ENCODE measurements at regions of chr6 and their contacts with region 1.

Region 1: GRCh38 chr6:139375232-139376016 is 976 bp upstream of the CITED2 start:
- DNase-seq: peak; percentile 84

Region 2: DNA sequence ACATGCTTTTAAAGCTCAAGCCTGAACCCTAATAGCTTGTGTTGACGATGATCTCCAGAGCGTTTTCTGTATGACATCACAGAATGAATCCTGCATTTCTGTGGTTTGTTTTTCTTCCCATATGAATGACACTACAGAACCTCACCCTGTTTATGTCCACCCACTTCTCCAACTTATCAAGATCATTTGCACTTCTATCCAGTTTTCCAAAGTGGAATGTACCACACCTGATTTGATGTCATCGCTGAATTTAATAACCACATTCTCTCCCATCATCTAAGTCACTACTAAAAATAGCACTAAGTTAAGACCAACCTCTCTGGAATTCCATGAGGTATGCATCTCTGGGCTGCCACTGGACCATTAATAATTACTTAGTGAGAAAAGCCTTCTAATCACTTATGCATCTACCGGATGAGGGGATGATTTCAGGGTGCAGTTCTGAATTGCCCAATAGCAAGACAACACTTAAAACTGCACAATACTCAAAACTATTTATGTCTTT is 32.3 kb after region 1 on chr6:
- CTCF ChIA-PET with region 1: no interaction called
- POLR2A ChIA-PET with region 1: no interaction called
- DNase-seq: no peak

Region 3: DNA sequence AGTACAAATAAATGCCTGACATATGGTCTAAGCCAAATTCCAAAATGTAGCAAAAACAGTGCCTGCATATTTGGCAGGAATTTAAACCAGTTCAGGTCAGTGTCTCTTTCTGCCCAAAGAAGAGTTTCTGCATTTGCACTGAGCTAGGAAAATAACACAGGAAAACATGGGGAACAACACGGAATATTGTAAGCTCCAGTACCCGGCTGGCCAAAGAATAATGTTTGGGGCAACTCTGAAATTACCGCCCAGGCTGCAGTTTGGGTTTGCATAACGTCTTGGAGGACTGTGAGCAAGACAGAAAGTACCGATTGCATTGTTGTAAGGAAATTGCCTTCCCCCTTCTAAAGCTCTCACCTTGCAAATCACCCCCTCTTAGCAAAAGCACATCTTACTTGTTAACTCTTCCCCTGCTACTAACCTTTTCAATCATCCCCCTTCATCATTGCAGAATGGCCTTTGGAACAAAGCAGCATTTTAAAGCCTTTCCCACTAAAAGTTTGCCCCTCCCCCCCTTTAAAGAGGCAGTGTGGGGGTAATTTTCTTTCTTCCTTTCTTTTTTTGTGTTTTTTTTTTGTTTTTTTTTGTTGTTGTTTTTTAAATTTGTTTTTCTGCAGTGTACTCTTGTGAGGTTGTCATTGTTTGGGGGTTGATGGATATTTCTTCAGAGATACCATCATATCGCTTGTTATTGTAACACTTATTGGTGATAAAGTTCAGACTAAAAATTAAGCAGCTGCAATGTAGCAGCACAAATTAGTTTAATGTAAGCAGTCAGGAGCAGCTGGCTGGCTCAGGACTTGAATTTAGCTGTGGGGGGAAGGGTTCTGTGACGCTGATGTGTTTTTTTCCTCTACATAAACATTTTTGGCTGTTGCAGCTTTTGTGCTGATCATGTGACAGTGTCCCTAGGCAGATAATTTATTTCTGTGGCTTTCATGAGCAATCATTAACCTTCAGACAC is 99.0 kb after region 1 on chr6:
- CTCF ChIA-PET with region 1: no interaction called
- POLR2A ChIA-PET with region 1: interaction called, 29 read pairs
- DNase-seq: peak; percentile 29

Region 4: GRCh38 chr6:139577763-139578604 is 202.6 kb after region 1 on chr6:
- CTCF ChIA-PET with region 1: no interaction called
- POLR2A ChIA-PET with region 1: interaction called, 12 read pairs
- DNase-seq: no peak

Region 5: DNA sequence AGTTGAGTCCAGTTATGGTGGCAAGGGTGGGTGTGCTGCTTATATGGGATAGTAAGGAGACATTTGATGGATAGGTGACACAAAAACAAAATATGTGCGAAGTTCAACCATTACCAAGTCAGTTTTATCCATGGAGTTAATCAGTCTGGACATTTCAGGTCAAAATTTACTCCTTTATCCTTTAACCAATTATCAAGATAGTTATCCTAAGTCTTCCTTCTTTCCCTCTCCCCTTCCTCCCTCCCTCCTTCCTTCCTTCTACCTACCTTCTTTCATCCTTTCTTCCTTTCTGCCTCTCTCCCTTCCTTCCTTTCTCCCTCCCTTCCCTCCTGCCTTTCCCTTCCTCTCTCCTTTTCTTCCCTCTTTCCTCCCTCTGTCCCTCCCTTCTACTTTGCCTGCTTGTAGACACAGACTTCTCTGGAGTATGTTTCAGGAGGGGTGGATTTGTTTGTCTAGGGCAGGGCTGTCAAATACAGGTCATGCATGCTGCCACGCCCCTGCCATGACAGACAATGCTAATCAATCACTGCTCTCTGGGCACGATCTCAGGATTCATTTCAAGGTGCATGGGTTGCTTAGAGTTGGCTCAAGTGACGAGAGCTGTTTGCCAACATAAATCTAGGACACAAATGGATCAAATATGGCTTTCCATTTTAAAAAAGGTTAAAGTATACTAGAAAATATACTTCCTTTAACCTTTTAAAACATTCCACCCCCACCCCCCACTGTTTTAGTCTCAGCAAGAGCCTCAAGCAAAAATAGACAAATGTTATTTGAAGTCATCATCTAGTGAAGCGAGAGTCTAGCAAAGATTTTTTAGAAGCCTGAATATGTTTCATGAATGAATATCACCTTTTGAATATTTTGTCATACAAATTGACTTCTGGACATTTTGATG is 280.6 kb after region 1 on chr6:
- CTCF ChIA-PET with region 1: no interaction called
- POLR2A ChIA-PET with region 1: interaction called, 10 read pairs
- DNase-seq: peak; percentile 41

Region 6: DNA sequence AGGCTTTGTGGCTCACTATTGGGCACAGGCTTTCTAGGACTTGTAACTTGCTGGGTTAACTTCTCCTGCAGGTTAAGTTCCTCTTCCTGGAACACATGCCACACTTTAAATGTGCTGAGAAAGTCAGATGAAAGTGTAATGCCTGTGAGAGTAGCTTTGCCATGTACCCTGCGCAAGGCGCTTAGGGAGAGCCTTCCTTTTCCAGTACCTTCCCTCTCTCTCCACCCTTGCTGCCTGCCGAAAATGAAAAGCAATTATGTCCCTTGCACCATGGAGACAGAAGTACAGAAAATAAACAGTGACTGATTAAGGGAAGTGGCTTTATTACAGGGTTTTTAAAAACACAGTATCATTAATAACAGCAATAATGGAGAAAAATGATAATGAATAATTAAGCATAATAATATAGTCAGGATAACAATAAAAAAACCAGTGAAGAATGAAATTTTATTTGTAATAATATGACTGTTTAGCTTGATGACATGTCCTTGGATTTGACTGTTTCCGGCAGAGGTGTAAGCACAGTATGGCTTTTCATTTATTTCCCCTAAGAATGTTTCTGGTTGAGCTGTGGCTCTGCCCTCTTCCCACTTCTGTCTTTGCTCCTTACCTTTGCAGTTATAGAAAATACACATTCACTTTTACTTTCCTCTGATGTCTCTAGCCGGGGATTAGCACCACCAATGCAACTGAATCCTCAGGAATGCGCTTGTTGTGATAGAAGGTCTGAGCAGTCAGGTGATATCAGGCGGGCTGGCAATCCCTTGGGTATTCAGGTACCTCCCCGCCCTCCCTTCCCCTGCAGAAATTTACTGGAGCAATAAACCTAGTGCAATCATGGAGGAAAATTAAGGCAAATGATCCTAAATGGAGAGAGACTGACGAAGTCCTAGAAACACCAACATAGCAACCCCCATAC is 471.4 kb after region 1 on chr6:
- CTCF ChIA-PET with region 1: no interaction called
- POLR2A ChIA-PET with region 1: interaction called, 19 read pairs
- DNase-seq: no peak

Region 7: DNA sequence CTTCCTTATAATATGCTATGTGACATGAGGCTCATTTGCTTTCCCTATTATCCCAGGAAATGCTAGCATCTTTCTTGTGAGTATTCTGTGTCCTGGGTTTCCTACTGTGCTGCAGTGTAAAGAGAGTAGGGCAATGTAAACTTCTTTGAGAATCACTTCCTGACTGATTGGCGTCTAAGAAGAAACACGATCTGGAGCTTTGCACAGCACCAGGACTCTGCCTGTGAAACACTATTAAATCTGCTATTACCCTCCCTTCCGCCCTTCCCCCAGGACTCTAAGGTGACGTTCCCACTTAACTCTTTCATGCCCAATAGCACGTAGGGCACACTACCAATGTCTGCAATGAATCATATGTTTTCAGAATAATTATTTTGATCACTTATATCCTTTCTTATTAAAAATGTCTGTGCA is 606.4 kb after region 1 on chr6:
- CTCF ChIA-PET with region 1: no interaction called
- POLR2A ChIA-PET with region 1: interaction called, 27 read pairs
- DNase-seq: peak; percentile 72

Measured in HEK293T (cell line).